Calu3 (cell line): ENCODE measurements at regions of chr1 and their contacts with region 1.

Region 1: GRCh38 chr1:195981448-195982139 is 626.6 kb downstream of the KCNT2 start:
- DNase-seq: no peak
- H3K4me3 Mint-ChIP-seq: no peak overlapping the region
- H3K27ac Mint-ChIP-seq: no peak overlapping the region
- H3K4me1 Mint-ChIP-seq: peaks cover 8% of the 10 kb centered on the region
- H3K27me3 Mint-ChIP-seq: no peaks in the 10 kb centered on the region
- CTCF ChIP-seq: no peak

Region 2: GRCh38 chr1:195511501-195511900 is 470.1 kb before region 1 on chr1:
- CTCF ChIA-PET with region 1: interaction called, 11 read pairs
- intact Hi-C with region 1: no loop called
- DNase-seq: no peak
- H3K4me3 Mint-ChIP-seq: no peak overlapping the region
- H3K27ac Mint-ChIP-seq: no peak overlapping the region
- H3K4me1 Mint-ChIP-seq: peaks cover 8% of the 10 kb centered on the region
- H3K27me3 Mint-ChIP-seq: no peaks in the 10 kb centered on the region
- CTCF ChIP-seq: no peak